Testis (tissue), 5 donors: ENCODE measurements at regions of chr2 and their contacts with region 1.

Region 1: GRCh38 chr2:120330946-120331822 is 14.8 kb upstream of the INHBB start:
- DNase-seq: no peak
- H3K4me3 ChIP-seq: no peak overlapping the region
- H3K27ac ChIP-seq: no peak overlapping the region
- H3K4me1 ChIP-seq: no peaks in the 10 kb centered on the region
- H3K27me3 ChIP-seq: no peaks in the 10 kb centered on the region
- CTCF ChIP-seq: no peak
- POLR2A ChIP-seq: no peak

Region 2: DNA sequence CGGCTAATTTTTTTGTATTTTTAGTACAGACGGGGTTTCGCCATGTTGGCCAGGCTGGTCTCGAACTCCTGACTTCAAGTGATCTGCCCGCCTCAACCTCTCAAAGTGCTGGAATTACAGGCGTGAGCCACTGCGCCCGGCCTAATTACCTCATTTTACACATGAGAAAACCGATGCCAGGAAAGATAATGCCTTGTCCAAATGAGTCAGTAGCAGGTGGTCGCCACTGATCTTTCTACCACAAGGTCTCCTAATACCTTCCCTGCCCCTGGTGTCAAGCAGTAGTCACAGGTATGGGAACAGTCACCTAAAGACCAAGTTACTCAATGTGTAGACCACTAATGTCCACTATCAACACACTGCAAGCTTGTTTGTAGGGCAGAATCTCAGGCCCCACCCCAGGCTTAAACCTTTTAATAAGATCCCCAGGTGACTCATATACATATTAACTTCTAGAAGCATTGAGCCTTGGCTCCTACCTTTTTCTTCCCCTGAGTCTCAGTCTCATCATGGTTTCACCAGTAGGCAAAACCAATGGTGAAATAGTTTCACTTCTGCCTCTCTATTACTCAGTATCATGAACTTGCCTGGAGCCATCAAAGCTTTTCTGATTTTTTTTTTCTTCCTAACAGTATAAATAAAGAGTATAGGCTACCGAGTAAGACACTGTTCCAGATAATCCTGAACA is 325.2 kb before region 1 on chr2:
- intact Hi-C with region 1: no loop called
- DNase-seq: no peak
- H3K4me3 ChIP-seq: no peak overlapping the region
- H3K27ac ChIP-seq: no peak overlapping the region
- H3K4me1 ChIP-seq: no peaks in the 10 kb centered on the region
- H3K27me3 ChIP-seq: no peaks in the 10 kb centered on the region
- CTCF ChIP-seq: no peak
- POLR2A ChIP-seq: no peak

Region 3: GRCh38 chr2:120272763-120273481 is 58.3 kb before region 1 on chr2:
- intact Hi-C with region 1: no loop called
- DNase-seq: no peak
- H3K4me3 ChIP-seq: no peak overlapping the region
- H3K27ac ChIP-seq: no peak overlapping the region
- H3K4me1 ChIP-seq: no peaks in the 10 kb centered on the region
- H3K27me3 ChIP-seq: no peaks in the 10 kb centered on the region
- CTCF ChIP-seq: no peak
- POLR2A ChIP-seq: no peak

Region 4: DNA sequence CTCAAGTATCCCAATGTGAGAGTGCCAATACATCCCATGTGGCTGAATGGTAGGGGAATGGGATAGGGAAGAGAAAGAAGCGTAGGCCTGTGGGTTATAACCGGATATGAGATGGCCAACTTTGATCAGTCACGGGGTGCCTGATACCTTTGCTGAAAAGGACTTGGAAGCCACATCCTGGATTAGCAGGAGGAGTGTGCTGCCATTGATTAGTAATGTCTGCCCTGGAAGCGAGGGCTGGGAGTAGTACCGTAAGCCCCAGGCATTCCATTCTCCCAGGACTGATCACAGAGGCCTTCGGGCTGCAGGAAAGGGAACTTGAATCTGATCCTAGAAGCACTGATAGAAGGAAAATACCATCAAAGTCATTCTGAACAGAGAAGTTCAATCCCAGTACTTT is 735.3 kb after region 1 on chr2:
- intact Hi-C with region 1: loop called (anchors 10 kb)
- DNase-seq: no peak
- H3K4me3 ChIP-seq: no peak overlapping the region
- H3K27ac ChIP-seq: no peak overlapping the region
- H3K4me1 ChIP-seq: peaks cover 4% of the 10 kb centered on the region
- H3K27me3 ChIP-seq: no peaks in the 10 kb centered on the region
- CTCF ChIP-seq: no peak
- POLR2A ChIP-seq: no peak